Activated T-helper 1 cell treated with anti-CD3 and anti-CD28 coated beads, Interleukin-12 subunit alpha, Interleukin-12 subunit beta, Interleukin-2, Interleukin-4 antibody, amounts not matched to agents 30 ng/mL and 10 ng/mL and 1 ng/mL, durations not matched to agents 14 hours and 24 hours and 36 hours (primary cell): ENCODE measurements at regions of chr1 and their contacts with region 1.

Region 1: DNA sequence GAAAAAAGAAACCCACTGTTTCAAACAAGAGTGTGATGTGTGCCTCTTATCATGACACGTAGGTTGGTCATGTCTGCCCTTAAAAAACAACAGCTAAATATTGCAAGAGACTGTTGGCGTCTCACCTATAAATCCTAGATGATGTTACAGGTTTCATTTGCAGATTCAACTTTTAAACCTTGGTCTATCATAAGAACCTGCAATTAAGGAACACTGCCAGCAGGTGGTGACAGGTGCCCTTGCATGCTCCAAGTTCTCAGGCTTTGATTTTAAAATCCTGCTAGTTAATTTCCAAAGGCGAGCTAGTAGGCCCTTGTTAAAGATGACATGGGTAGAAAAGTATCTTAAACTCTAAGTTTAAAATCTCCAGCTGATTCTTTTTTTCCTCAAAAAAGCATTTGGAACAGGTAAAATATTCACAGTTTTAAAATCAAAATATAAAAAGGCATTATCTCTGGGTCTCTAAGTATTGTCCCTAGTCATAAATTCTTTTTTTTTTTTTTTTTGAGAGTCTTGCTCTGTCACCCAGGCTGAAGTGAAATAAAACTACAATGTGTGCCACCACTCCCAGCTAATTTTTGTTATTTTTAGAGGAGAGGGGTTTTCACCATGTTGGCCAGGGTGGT is 39.1 kb downstream of the CLSTN1 start:
- DNase-seq: peak; percentile 50
- H3K4me3 Mint-ChIP-seq: no peak overlapping the region
- H3K27ac Mint-ChIP-seq: no peak overlapping the region
- H3K4me1 Mint-ChIP-seq: peaks cover 37% of the 10 kb centered on the region
- H3K27me3 Mint-ChIP-seq: no peaks in the 10 kb centered on the region

Region 2: GRCh38 chr1:9798236-9799130 is 13.9 kb after region 1 on chr1:
- intact Hi-C with region 1: loop called (anchors 1 kb)
- DNase-seq: no peak
- H3K4me3 Mint-ChIP-seq: no peak overlapping the region
- H3K27ac Mint-ChIP-seq: no peak overlapping the region
- H3K4me1 Mint-ChIP-seq: peaks cover 33% of the 10 kb centered on the region
- H3K27me3 Mint-ChIP-seq: no peaks in the 10 kb centered on the region